ENCODE measurements at regions of chr19 and their contacts with region 1.

Region 1: DNA sequence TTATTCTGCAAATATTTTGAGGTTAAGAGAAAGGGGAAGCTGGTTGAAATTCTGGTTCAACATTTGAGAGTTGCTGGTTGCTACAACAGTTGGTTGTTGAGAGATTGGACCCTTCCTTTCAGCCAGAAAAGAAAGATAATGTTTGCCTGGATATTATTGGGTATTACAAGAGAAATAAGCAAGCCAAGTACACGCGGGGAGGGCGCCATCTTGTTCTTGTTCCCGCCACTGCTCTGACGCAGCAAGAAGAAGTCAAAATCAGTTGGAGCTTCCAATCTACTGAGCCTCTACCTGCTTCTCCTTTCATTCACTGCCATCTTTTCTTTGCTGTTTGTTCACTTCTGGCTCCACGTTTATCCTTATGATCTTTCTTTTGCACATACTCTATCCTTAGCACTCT is 18.4 kb downstream of the BSPH1 start:
- DNase-seq: no peak
- ATAC-seq: no peak
- H3K4me3 ChIP-seq: no peak overlapping the region
- H3K27ac ChIP-seq: no peak overlapping the region
- H3K4me1 ChIP-seq: no peaks in the 10 kb centered on the region
- H3K27me3 ChIP-seq: peaks cover 0 to 4% (median 2%) of the 10 kb centered on the region in 3 donors
- CTCF ChIP-seq: no peak
- POLR2A ChIP-seq: no peak

Region 2: DNA sequence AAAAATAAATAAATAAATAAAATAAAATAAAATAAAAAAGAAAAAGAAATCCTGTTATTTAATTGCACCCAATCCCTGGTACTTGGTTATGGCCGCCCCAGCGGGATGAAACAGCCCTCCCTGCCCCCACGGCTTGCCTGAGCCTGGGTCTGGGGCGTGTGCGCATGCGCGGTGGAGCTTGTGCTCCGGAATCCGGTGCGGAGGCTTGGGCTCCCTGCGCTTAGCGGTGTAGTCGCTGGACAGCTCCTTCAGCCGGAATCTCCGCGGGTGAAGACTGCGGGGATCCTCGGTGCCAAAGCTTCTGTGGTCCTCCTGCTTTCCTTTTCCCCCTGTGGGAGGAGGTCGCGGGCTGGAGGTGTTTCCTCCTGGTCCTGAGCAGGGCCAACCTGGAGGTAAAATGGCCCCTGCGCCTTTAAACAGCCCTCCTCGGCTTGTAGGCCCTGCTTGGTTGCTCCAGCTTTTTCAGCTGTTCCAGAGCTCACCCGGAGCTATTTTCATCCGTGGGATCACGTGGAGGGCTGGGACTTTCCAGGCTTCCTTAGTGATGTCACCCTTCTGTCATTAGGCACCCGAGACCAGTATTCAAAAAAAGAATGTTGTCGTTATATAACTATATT is 136.9 kb after region 1 on chr19 and contains the start of gene PLA2G4C:
- in situ Hi-C with region 1: loop called in 1 of 4 experiments (anchors 25 kb)
- intact Hi-C with region 1: no loop called
- DNase-seq: peak; percentile 84 to 96
- ATAC-seq: peak; percentile 93 to 97
- H3K4me3 ChIP-seq: peak within 1 kb of the TSS; percentile 55 to 66 (median 63)
- H3K27ac ChIP-seq: peak within 1 kb of the TSS; percentile 90 to 99 (median 96)
- H3K4me1 ChIP-seq: peaks cover 25 to 34% of the 10 kb centered on the region in 2 donors
- H3K27me3 ChIP-seq: no peaks in the 10 kb centered on the region
- CTCF ChIP-seq: no peak
- POLR2A ChIP-seq: peak; percentile 92
- total RNA-seq, gene PLA2G4C: 25.7 to 61.1 (median 51.1) TPM

Region 3: GRCh38 chr19:48152551-48152950 is 179.0 kb after region 1 on chr19:
- in situ Hi-C with region 1: loop called in 3 of 4 experiments (anchors 10 to 25 kb)
- intact Hi-C with region 1: no loop called
- DNase-seq: peak; percentile 12 to 42
- ATAC-seq: peak; percentile 41 to 83
- H3K4me3 ChIP-seq: no peak overlapping the region
- H3K27ac ChIP-seq: no peak overlapping the region
- H3K4me1 ChIP-seq: no peaks in the 10 kb centered on the region
- H3K27me3 ChIP-seq: no peaks in the 10 kb centered on the region
- CTCF ChIP-seq: peak; percentile 85 to 93 (median 88)
- POLR2A ChIP-seq: no peak

Region 4: DNA sequence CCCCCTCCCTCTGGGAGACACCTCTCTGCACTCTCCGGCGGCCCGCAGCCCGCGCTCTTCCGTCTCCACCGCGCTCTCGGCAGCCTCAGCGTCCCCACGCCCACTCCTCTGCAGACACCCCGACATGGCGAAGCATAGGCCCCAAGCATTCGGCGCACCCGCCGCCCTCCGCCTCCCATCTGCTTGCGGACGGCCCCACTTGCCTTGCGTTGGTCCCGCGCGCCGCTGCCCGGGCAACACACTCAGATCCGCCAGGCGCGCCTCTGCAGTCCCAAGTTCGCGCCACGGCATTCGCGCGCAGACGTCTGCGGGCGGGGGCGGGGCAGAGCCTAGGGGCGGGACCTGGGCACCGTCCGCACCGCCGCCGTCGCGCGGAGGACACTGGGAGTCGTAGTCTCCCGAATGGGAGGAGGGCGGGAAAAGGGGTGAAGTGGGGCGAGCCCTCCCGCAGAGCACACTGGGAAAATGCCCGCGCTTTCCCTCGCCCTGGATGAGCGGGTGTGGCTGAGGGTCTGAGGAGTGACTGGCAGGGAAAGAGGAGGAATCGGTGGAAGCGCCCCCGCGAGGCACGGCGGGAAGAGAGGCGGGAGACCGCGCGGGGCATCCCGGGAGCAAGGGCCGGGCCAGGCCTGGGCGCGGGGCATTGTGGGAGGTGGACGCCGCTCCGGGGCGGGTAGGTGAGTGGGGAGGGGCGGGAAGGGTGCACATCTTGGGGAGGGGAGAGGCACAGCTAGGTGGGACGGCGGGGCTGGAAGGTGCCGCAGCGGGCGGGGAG is 196.7 kb after region 1 on chr19 and contains the starts of genes LIG1 and ZSWIM9:
- in situ Hi-C with region 1: loop called in 2 of 4 experiments (anchors 25 kb)
- intact Hi-C with region 1: no loop called
- DNase-seq: peak; percentile 75 to 78
- ATAC-seq: peak; percentile 96 to 97
- H3K4me3 ChIP-seq: peak within 1 kb of the TSS; percentile 90 to 95 (median 93)
- H3K27ac ChIP-seq: peak within 1 kb of the TSS; percentile 95 to 99 (median 98)
- H3K4me1 ChIP-seq: peaks cover 6 to 15% of the 10 kb centered on the region in 2 donors
- H3K27me3 ChIP-seq: no peaks in the 10 kb centered on the region
- CTCF ChIP-seq: peak in 2 of 5 experiments; percentile 32 to 35
- POLR2A ChIP-seq: no peak
- total RNA-seq, gene LIG1: 3.7 to 9.2 (median 7.1) TPM
- total RNA-seq, gene ZSWIM9: 1.6 to 8.4 (median 2.8) TPM

Measured in gastrocnemius medialis (tissue), 4 donors.